ENCODE measurements at regions of chr9 and their contacts with region 1.

Region 1: DNA sequence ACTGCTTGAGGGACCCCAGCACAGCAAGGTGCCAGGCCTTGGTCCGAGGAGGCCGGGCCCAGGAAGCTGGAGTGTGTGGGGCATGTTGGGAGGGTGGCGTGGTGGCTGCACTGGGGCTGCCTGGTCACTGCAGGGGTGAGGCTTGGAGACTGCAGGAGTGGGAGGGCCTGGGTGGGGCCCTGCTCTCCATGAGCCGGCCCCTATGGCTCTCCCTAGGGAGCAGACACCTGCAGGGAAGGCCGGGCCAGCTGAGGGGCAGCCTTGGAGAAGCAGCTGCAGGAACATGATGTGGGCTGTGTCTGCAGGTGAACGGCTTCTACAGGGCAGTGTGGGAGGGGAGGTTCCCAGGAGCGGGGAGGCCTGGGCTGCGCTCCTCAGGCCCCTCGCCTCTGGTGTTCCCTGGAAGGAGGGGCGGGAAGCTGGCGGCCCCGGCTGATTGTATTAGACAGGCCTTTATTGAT is 41.7 kb upstream of the TMEM250 start:
- DNase-seq: no peak

Region 2: GRCh38 chr9:134995792-134996120 is 1164.7 kb before region 1 on chr9:
- intact Hi-C with region 1: loop called in 1 of 2 experiments (anchors 5 kb)
- DNase-seq: peak; percentile 52

Region 3: GRCh38 chr9:136467766-136468563 is 307.6 kb after region 1 on chr9:
- intact Hi-C with region 1: no loop called
- DNase-seq: no peak

Region 4: GRCh38 chr9:136512651-136513071 is 352.2 kb after region 1 on chr9:
- intact Hi-C with region 1: loop called in 1 of 2 experiments (anchors 5 kb)
- DNase-seq: no peak

Measured in posterior vena cava (tissue), 2 donors.